CD8-positive, alpha-beta T cell (primary cell): ENCODE measurements at regions of chr11 and their contacts with region 1.

Region 1: GRCh38 chr11:67439321-67439883 is 1.9 kb upstream of the PTPRCAP start:
- DNase-seq: peak in 3 of 9 experiments; percentile 32 to 65 (median 53)
- ATAC-seq: no peak
- H3K4me3 ChIP-seq: peak overlapping the region; percentile 77 to 98
- H3K4me3 Mint-ChIP-seq: peak overlapping the region; percentile 89
- H3K27ac ChIP-seq: peak overlapping the region; percentile 34 to 67
- H3K27ac Mint-ChIP-seq: peak overlapping the region; percentile 94
- H3K4me1 ChIP-seq: peaks cover 64% of the 10 kb centered on the region
- H3K4me1 Mint-ChIP-seq: peaks cover 60% of the 10 kb centered on the region
- H3K27me3 ChIP-seq: no peaks in the 10 kb centered on the region
- H3K27me3 Mint-ChIP-seq: no peaks in the 10 kb centered on the region
- CTCF ChIP-seq: no peak

Region 2: DNA sequence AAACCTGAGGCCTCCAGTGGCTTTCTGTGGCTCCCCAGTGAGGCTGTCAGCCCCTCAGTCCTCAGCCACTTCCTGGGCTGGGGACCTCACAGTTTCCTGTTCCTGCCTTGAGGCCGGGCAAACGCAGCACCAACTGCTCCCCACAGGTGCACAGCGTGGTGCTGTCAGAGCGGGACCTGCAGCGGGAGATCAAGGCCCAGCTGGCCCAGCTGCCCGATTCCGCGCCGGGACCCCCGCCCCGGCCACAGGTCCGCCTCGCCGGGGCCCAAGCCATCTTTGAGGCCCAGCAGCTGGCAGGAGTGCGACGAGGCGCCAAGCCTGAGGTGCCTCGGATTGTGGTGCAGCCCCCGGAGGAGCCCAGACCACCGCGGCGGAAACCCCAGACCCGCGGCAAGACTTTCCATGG is 30.1 kb before region 1 on chr11:
- CTCF ChIA-PET with region 1: interaction called, 13 read pairs
- POLR2A ChIA-PET with region 1: interaction called, 317 read pairs
- intact Hi-C with region 1: no loop called
- DNase-seq: peak; percentile 54 to 91 (median 82)
- ATAC-seq: peak; percentile 64
- H3K4me3 ChIP-seq: peak overlapping the region; percentile 66 to 99
- H3K4me3 Mint-ChIP-seq: peak overlapping the region; percentile 95
- H3K27ac ChIP-seq: peak overlapping the region; percentile 69 to 71
- H3K27ac Mint-ChIP-seq: peak overlapping the region; percentile 91
- H3K4me1 ChIP-seq: peaks cover 91% of the 10 kb centered on the region
- H3K4me1 Mint-ChIP-seq: peaks cover 87% of the 10 kb centered on the region
- H3K27me3 ChIP-seq: no peaks in the 10 kb centered on the region
- H3K27me3 Mint-ChIP-seq: no peaks in the 10 kb centered on the region
- CTCF ChIP-seq: no peak

Region 3: GRCh38 chr11:67428052-67428914 is 11.1 kb before region 1 on chr11 and contains the start of gene RPS6KB2:
- CTCF ChIA-PET with region 1: interaction called, 7 read pairs
- POLR2A ChIA-PET with region 1: interaction called, 47 read pairs
- intact Hi-C with region 1: loop called in 1 of 2 experiments (anchors 1 kb)
- DNase-seq: peak; percentile 97 to 100 (median 98)
- ATAC-seq: peak; percentile 89
- H3K4me3 ChIP-seq: peak within 1 kb of the TSS; percentile 67 to 73
- H3K4me3 Mint-ChIP-seq: peak within 1 kb of the TSS; percentile 99
- H3K27ac ChIP-seq: peak within 1 kb of the TSS; percentile 86 to 87
- H3K27ac Mint-ChIP-seq: peak within 1 kb of the TSS; percentile 95
- H3K4me1 ChIP-seq: peaks cover 34% of the 10 kb centered on the region
- H3K4me1 Mint-ChIP-seq: peaks cover 41% of the 10 kb centered on the region
- H3K27me3 ChIP-seq: no peaks in the 10 kb centered on the region
- H3K27me3 Mint-ChIP-seq: no peaks in the 10 kb centered on the region
- CTCF ChIP-seq: no peak
- total RNA-seq, gene RPS6KB2: 71.8 to 76.2 TPM

Region 4: GRCh38 chr11:67468835-67469811 is 29.7 kb after region 1 on chr11 and contains the start of gene TMEM134:
- CTCF ChIA-PET with region 1: interaction called, 10 read pairs
- POLR2A ChIA-PET with region 1: interaction called, 130 read pairs
- intact Hi-C with region 1: loop called (anchors 2 kb)
- DNase-seq: peak; percentile 86 to 97 (median 91)
- ATAC-seq: peak; percentile 81
- H3K4me3 ChIP-seq: peak within 1 kb of the TSS; percentile 80 to 89
- H3K4me3 Mint-ChIP-seq: peak within 1 kb of the TSS; percentile 89
- H3K27ac ChIP-seq: peak within 1 kb of the TSS; percentile 78 to 82
- H3K27ac Mint-ChIP-seq: peak within 1 kb of the TSS; percentile 93
- H3K4me1 ChIP-seq: peaks cover 39% of the 10 kb centered on the region
- H3K4me1 Mint-ChIP-seq: peaks cover 37% of the 10 kb centered on the region
- H3K27me3 ChIP-seq: no peaks in the 10 kb centered on the region
- H3K27me3 Mint-ChIP-seq: no peaks in the 10 kb centered on the region
- CTCF ChIP-seq: peak; percentile 43
- total RNA-seq, gene TMEM134: 41.2 to 48.5 TPM

Region 5: DNA sequence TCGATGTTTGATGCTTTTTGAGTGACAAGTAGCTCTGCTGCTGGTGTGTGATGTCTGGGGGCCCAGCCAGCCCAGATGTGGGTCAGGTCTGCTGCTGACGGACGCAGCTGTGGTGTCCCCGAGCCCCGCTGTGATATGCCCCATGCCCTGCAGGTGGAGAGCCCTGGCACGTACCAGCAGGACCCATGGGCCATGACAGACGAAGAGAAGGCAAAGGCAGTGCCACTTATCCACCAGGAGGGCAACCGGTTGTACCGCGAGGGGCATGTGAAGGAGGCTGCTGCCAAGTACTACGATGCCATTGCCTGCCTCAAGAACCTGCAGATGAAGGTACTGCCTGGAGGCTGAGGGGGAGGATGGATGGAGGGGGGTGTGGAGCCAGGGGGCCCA is 50.5 kb after region 1 on chr11:
- CTCF ChIA-PET with region 1: interaction called, 4 read pairs
- POLR2A ChIA-PET with region 1: interaction called, 65 read pairs
- intact Hi-C with region 1: loop called in 1 of 2 experiments (anchors 2 kb)
- DNase-seq: peak in 1 of 9 experiments; percentile 12
- ATAC-seq: no peak
- H3K4me3 ChIP-seq: no peak overlapping the region
- H3K4me3 Mint-ChIP-seq: no peak overlapping the region
- H3K27ac ChIP-seq: no peak overlapping the region
- H3K27ac Mint-ChIP-seq: peak overlapping the region; percentile 75
- H3K4me1 ChIP-seq: peaks cover 36% of the 10 kb centered on the region
- H3K4me1 Mint-ChIP-seq: peaks cover 37% of the 10 kb centered on the region
- H3K27me3 ChIP-seq: no peaks in the 10 kb centered on the region
- H3K27me3 Mint-ChIP-seq: no peaks in the 10 kb centered on the region
- CTCF ChIP-seq: no peak

Region 6: GRCh38 chr11:67627812-67628624 is 188.6 kb after region 1 on chr11:
- CTCF ChIA-PET with region 1: no interaction called
- POLR2A ChIA-PET with region 1: no interaction called
- intact Hi-C with region 1: no loop called
- DNase-seq: peak in 3 of 9 experiments; percentile 16 to 38 (median 19)
- ATAC-seq: no peak
- H3K4me3 ChIP-seq: no peak overlapping the region
- H3K4me3 Mint-ChIP-seq: no peak overlapping the region
- H3K27ac ChIP-seq: no peak overlapping the region
- H3K27ac Mint-ChIP-seq: no peak overlapping the region
- H3K4me1 ChIP-seq: peaks cover 9% of the 10 kb centered on the region
- H3K4me1 Mint-ChIP-seq: peaks cover 8% of the 10 kb centered on the region
- H3K27me3 ChIP-seq: no peaks in the 10 kb centered on the region
- H3K27me3 Mint-ChIP-seq: no peaks in the 10 kb centered on the region
- CTCF ChIP-seq: no peak